Astrocyte of the cerebellum (primary cell): ENCODE measurements at regions of chr13 and their contacts with region 1.

Region 1: GRCh38 chr13:69751259-69751658 is 356.4 kb upstream of the ATXN8OS start:
- DNase-seq: no peak
- H3K4me3 ChIP-seq: no peak overlapping the region
- CTCF ChIP-seq: no peak

Region 2: DNA sequence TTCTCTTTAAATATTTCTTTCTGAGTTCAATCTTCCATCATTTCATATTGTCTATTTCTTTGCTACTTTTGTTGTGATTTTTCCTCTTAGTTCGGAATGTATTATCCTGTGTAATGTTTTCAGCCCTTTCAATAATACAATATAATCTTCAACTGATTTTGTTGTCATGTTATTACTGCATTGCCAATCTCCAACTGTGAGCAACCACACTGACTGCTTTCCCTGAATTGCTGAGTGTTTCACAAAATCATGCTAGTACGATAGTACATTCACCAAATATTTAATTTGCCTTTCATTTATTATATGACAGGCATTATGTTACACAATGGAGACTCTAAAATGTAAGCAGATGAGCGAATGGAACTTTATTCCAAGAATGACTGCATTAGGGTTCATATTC is 387.9 kb before region 1 on chr13:
- in situ Hi-C with region 1: no loop called
- DNase-seq: no peak
- H3K4me3 ChIP-seq: no peak overlapping the region
- CTCF ChIP-seq: no peak

Region 3: GRCh38 chr13:69644447-69644846 is 106.8 kb before region 1 on chr13:
- in situ Hi-C with region 1: no loop called
- DNase-seq: no peak
- H3K4me3 ChIP-seq: no peak overlapping the region
- CTCF ChIP-seq: no peak

Region 4: DNA sequence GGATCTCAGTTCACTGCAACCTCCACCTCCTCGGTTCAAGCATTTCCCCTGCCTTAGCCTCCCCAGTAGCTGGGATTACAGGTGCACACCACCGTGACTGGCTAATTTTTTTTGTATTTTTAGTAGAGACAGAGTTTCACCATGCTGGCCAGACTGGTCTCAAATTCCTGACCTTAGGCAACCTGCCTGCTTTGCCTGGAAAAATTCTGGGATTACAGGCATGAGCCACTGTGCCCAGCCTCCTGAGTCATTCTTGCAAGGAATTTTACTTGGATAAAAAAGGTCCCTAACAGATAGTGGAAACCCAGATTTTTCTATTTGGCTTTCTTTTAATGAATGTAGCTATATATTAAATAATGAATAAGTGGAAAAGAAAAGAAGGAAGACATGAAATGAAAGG is 93.6 kb before region 1 on chr13:
- in situ Hi-C with region 1: loop called (anchors 5 kb)
- DNase-seq: no peak
- H3K4me3 ChIP-seq: no peak overlapping the region
- CTCF ChIP-seq: no peak